ENCODE measurements at regions of chr15 and their contacts with region 1.

Region 1: GRCh38 chr15:43376017-43376705 is 5.3 kb downstream of the TUBGCP4 start:
- DNase-seq: no peak
- H3K4me3 ChIP-seq: no peak overlapping the region
- H3K27ac ChIP-seq: no peak overlapping the region
- H3K27me3 ChIP-seq: no peaks in the 10 kb centered on the region
- CTCF ChIP-seq: peak; percentile 80

Region 2: GRCh38 chr15:43241100-43241499 is 135.1 kb before region 1 on chr15:
- CTCF ChIA-PET with region 1: no interaction called
- POLR2A ChIA-PET with region 1: no interaction called
- DNase-seq: no peak
- H3K4me3 ChIP-seq: no peak overlapping the region
- H3K27ac ChIP-seq: no peak overlapping the region
- H3K27me3 ChIP-seq: peaks cover 41% of the 10 kb centered on the region
- CTCF ChIP-seq: no peak

Region 3: GRCh38 chr15:43390723-43391122 is 14.6 kb after region 1 on chr15:
- CTCF ChIA-PET with region 1: interaction called, 13 read pairs
- POLR2A ChIA-PET with region 1: no interaction called
- DNase-seq: no peak
- H3K4me3 ChIP-seq: no peak overlapping the region
- H3K27ac ChIP-seq: no peak overlapping the region
- H3K27me3 ChIP-seq: no peaks in the 10 kb centered on the region
- CTCF ChIP-seq: no peak

Measured in AG04450 (cell line).